ENCODE measurements at regions of chr7 and their contacts with region 1.

Region 1: GRCh38 chr7:55964261-55965099 is at the start of gene NIPSNAP2:
- DNase-seq: peak; percentile 99
- H3K4me3 ChIP-seq: peak within 1 kb of the TSS; percentile 62 to 91
- H3K27ac ChIP-seq: peak within 1 kb of the TSS; percentile 78 to 83
- H3K4me1 ChIP-seq: peaks cover 6% of the 10 kb centered on the region in 2 experiments; a peak in 2 of 4 replicates
- H3K27me3 ChIP-seq: no peaks in the 10 kb centered on the region
- CTCF ChIP-seq: peak; percentile 42
- EP300 ChIP-seq: no peak; a peak in 1 of 4 replicates
- RAD21 ChIP-seq: peak; percentile 55
- polyA plus RNA-seq, gene NIPSNAP2: 57.5 and 64.7 TPM in 2 replicates

Region 2: GRCh38 chr7:55641273-55641691 is 323.2 kb before region 1 on chr7:
- CTCF ChIA-PET with region 1: interaction called, 31 read pairs
- POLR2A ChIA-PET with region 1: interaction called, 8 read pairs
- DNase-seq: peak; percentile 66
- H3K4me3 ChIP-seq: no peak overlapping the region; a peak in 1 of 4 replicates
- H3K27ac ChIP-seq: no peak overlapping the region
- H3K4me1 ChIP-seq: no peaks in the 10 kb centered on the region
- H3K27me3 ChIP-seq: no peaks in the 10 kb centered on the region; the same call in 1 of the 2 replicates
- CTCF ChIP-seq: peak; percentile 96
- EP300 ChIP-seq: no peak
- RAD21 ChIP-seq: peak; percentile 100

Region 3: GRCh38 chr7:55871932-55872485 is 92.5 kb before region 1 on chr7:
- CTCF ChIA-PET with region 1: no interaction called
- POLR2A ChIA-PET with region 1: no interaction called
- DNase-seq: no peak
- H3K4me3 ChIP-seq: no peak overlapping the region
- H3K27ac ChIP-seq: no peak overlapping the region
- H3K4me1 ChIP-seq: no peaks in the 10 kb centered on the region
- H3K27me3 ChIP-seq: peaks cover 4% of the 10 kb centered on the region; the same call in 1 of the 2 replicates
- CTCF ChIP-seq: no peak
- EP300 ChIP-seq: no peak
- RAD21 ChIP-seq: no peak

Region 4: GRCh38 chr7:55951637-55952351 is 12.7 kb before region 1 on chr7 and contains the start of gene MRPS17:
- CTCF ChIA-PET with region 1: interaction called, 28 read pairs
- POLR2A ChIA-PET with region 1: interaction called, 7 read pairs
- DNase-seq: peak; percentile 99
- H3K4me3 ChIP-seq: peak within 1 kb of the TSS; percentile 81 to 96
- H3K27ac ChIP-seq: peak within 1 kb of the TSS; percentile 30 to 35; a peak in 2 of 4 replicates
- H3K4me1 ChIP-seq: peaks cover 0 to 6% of the 10 kb centered on the region in 2 experiments; a peak in 2 of 4 replicates
- H3K27me3 ChIP-seq: no peaks in the 10 kb centered on the region
- CTCF ChIP-seq: no peak; the same call in 1 of the 2 replicates
- EP300 ChIP-seq: no peak
- RAD21 ChIP-seq: peak; percentile 16; the same call in 1 of the 2 replicates
- polyA plus RNA-seq, gene MRPS17: 17.4 and 19.2 TPM in 2 replicates

Region 5: DNA sequence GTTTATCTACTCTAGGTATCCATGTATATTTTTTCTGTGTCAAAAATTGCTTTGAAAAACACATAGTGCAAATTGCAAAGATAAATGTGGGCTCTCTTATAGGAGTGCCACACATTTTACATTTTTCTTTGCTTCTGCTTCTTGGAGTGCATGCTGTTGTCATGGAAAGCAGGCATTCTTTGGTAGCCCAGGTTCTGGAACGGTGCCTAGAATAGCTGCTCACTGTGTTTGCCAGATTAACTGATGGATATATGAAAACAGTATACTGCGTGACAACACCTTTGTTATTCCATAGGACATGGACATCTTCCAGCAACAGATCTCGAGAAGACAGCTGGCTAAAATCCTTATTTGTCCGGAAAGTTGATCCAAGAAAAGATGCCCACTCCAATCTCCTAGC is 13.4 kb after region 1 on chr7:
- CTCF ChIA-PET with region 1: interaction called, 50 read pairs
- POLR2A ChIA-PET with region 1: interaction called, 5 read pairs
- DNase-seq: no peak
- H3K4me3 ChIP-seq: no peak overlapping the region
- H3K27ac ChIP-seq: peak overlapping the region in 1 of 2 experiments; percentile 11; a peak in 3 of 4 replicates
- H3K4me1 ChIP-seq: peaks cover 4% of the 10 kb centered on the region in 2 experiments; a peak in 3 of 4 replicates
- H3K27me3 ChIP-seq: no peaks in the 10 kb centered on the region
- CTCF ChIP-seq: no peak
- EP300 ChIP-seq: no peak
- RAD21 ChIP-seq: no peak

Region 6: GRCh38 chr7:55983537-55983936 is 19.1 kb after region 1 on chr7:
- CTCF ChIA-PET with region 1: interaction called, 50 read pairs
- POLR2A ChIA-PET with region 1: interaction called, 5 read pairs
- DNase-seq: no peak
- H3K4me3 ChIP-seq: no peak overlapping the region
- H3K27ac ChIP-seq: no peak overlapping the region
- H3K4me1 ChIP-seq: no peaks in the 10 kb centered on the region
- H3K27me3 ChIP-seq: no peaks in the 10 kb centered on the region
- CTCF ChIP-seq: no peak
- EP300 ChIP-seq: no peak
- RAD21 ChIP-seq: no peak

Region 7: GRCh38 chr7:56051339-56052191 is 87.1 kb after region 1 on chr7 and contains the starts of genes CCT6A and PSPH:
- CTCF ChIA-PET with region 1: interaction called, 10 read pairs
- POLR2A ChIA-PET with region 1: no interaction called
- DNase-seq: peak; percentile 99
- H3K4me3 ChIP-seq: peak within 1 kb of the TSS; percentile 74 to 98
- H3K27ac ChIP-seq: peak within 1 kb of the TSS; percentile 85 to 90
- H3K4me1 ChIP-seq: peaks cover 22 to 52% of the 10 kb centered on the region in 2 experiments
- H3K27me3 ChIP-seq: no peaks in the 10 kb centered on the region
- CTCF ChIP-seq: peak; percentile 8; the same call in 1 of the 2 replicates
- EP300 ChIP-seq: peak; percentile 24 to 50; a peak in 3 of 4 replicates
- RAD21 ChIP-seq: no peak; the same call in 1 of the 2 replicates
- polyA plus RNA-seq, gene CCT6A: 221 and 345 TPM in 2 replicates
- polyA plus RNA-seq, gene PSPH: 42.0 and 50.5 TPM in 2 replicates

Region 8: GRCh38 chr7:56074371-56074791 is 109.9 kb after region 1 on chr7:
- CTCF ChIA-PET with region 1: interaction called, 12 read pairs
- POLR2A ChIA-PET with region 1: no interaction called
- DNase-seq: peak; percentile 88
- H3K4me3 ChIP-seq: no peak overlapping the region; a peak in 1 of 4 replicates
- H3K27ac ChIP-seq: no peak overlapping the region
- H3K4me1 ChIP-seq: peaks cover 11 to 17% of the 10 kb centered on the region in 2 experiments; a peak in 3 of 4 replicates
- H3K27me3 ChIP-seq: no peaks in the 10 kb centered on the region
- CTCF ChIP-seq: peak; percentile 99
- EP300 ChIP-seq: 0 out of 4 replicates have a peak, but pooled peaks of 1 of the 2 experiments have one; percentile 27
- RAD21 ChIP-seq: peak; percentile 99

Measured in SK-N-SH (cell line).